Activated B cell treated with CpG ODN at 0.5 μM for 24 hours (primary cell): ENCODE measurements at regions of chr16 and their contacts with region 1.

Region 1: GRCh38 chr16:68590201-68590994 is 51.3 kb downstream of the ZFP90 start:
- DNase-seq: peak; percentile 37
- ATAC-seq: peak; percentile 58
- H3K4me3 Mint-ChIP-seq: no peak overlapping the region
- H3K27ac Mint-ChIP-seq: no peak overlapping the region
- H3K4me1 Mint-ChIP-seq: no peaks in the 10 kb centered on the region
- H3K27me3 Mint-ChIP-seq: no peaks in the 10 kb centered on the region
- CTCF ChIP-seq: no peak

Region 2: GRCh38 chr16:68800257-68800875 is 210.0 kb after region 1 on chr16:
- CTCF ChIA-PET with region 1: interaction called, 12 read pairs
- POLR2A ChIA-PET with region 1: no interaction called
- intact Hi-C with region 1: loop called (anchors 2 kb)
- DNase-seq: peak; percentile 23
- ATAC-seq: peak; percentile 98
- H3K4me3 Mint-ChIP-seq: no peak overlapping the region
- H3K27ac Mint-ChIP-seq: peak overlapping the region; percentile 24
- H3K4me1 Mint-ChIP-seq: peaks cover 4% of the 10 kb centered on the region
- H3K27me3 Mint-ChIP-seq: peaks cover under 1% of the 10 kb centered on the region
- CTCF ChIP-seq: no peak